Calu3 (cell line): ENCODE measurements at regions of chr1 and their contacts with region 1.

Region 1: DNA sequence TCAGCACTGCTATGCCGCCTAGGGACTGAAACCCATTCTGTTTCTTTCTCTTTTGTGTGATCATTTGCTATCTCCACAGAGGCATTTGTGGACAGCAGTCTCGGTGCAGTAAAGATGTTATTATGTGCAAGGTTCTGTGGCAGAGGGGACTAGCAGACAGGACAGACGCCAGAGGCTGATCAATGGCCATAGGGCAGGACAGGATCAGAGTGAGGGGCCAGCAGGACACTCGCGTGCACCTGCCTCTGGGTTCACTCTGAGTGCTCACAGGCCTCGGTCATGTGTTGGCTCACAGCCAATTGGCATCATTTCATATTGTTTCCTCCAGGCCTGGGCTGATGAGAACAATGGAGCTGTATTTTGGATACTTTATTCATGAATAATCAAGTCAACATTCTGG is 212.6 kb downstream of the TGFB2 start:
- DNase-seq: peak; percentile 86
- H3K4me3 Mint-ChIP-seq: peak overlapping the region; percentile 19
- H3K27ac Mint-ChIP-seq: peak overlapping the region; percentile 72
- H3K4me1 Mint-ChIP-seq: peaks cover 52% of the 10 kb centered on the region
- H3K27me3 Mint-ChIP-seq: no peaks in the 10 kb centered on the region
- CTCF ChIP-seq: no peak

Region 2: DNA sequence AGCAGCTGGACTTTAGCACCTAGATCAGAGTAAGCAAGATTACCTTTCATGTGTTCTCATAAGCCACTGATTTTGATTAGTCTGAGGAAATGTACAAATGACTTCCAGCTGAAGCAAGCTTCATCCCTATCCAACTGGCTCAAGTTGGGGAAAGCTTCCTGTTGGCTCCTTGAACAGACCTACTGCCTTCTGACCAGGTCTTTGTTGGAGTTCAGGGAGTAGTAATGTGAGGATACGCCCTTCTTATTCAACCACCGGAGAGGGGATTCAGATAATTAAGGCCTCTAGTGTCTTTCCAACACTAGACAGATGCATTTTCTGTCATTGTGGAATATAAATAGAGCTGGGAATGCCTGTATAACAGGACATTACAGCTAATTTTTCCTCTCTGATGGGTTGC is 56.3 kb after region 1 on chr1:
- CTCF ChIA-PET with region 1: no interaction called
- intact Hi-C with region 1: loop called (anchors 2 kb)
- DNase-seq: no peak
- H3K4me3 Mint-ChIP-seq: no peak overlapping the region
- H3K27ac Mint-ChIP-seq: no peak overlapping the region
- H3K4me1 Mint-ChIP-seq: peaks cover 8% of the 10 kb centered on the region
- H3K27me3 Mint-ChIP-seq: no peaks in the 10 kb centered on the region
- CTCF ChIP-seq: no peak

Region 3: GRCh38 chr1:218658899-218659298 is 101.2 kb after region 1 on chr1:
- CTCF ChIA-PET with region 1: no interaction called
- intact Hi-C with region 1: loop called (anchors 5 kb)
- DNase-seq: peak; percentile 37
- H3K4me3 Mint-ChIP-seq: no peak overlapping the region
- H3K27ac Mint-ChIP-seq: peak overlapping the region; percentile 75
- H3K4me1 Mint-ChIP-seq: peaks cover 59% of the 10 kb centered on the region
- H3K27me3 Mint-ChIP-seq: no peaks in the 10 kb centered on the region
- CTCF ChIP-seq: no peak

Region 4: GRCh38 chr1:218674280-218674773 is 116.6 kb after region 1 on chr1:
- CTCF ChIA-PET with region 1: no interaction called
- intact Hi-C with region 1: loop called (anchors 5 kb)
- DNase-seq: peak; percentile 76
- H3K4me3 Mint-ChIP-seq: peak overlapping the region; percentile 28
- H3K27ac Mint-ChIP-seq: peak overlapping the region; percentile 59
- H3K4me1 Mint-ChIP-seq: peaks cover 19% of the 10 kb centered on the region
- H3K27me3 Mint-ChIP-seq: no peaks in the 10 kb centered on the region
- CTCF ChIP-seq: no peak

Region 5: DNA sequence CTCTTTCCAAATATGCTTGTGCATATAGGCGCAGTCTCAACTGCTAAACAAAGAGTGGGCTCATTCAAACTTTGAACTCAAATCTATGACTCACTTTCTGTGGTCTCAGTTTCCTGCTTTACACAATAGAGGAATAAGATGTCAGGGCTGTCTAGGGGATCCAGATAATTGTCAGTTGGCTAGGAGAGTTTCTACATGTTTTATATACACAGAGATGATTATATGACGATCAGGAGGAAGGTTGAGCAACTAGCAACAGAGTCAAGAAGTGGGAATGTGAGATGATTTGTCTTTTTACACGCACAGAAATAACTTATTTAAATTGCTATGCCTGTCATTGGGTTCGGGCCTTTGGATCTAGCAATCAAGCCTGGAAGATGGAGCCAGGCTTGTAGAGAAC is 316.6 kb after region 1 on chr1:
- CTCF ChIA-PET with region 1: no interaction called
- intact Hi-C with region 1: no loop called
- DNase-seq: peak; percentile 52
- H3K4me3 Mint-ChIP-seq: peak overlapping the region; percentile 47
- H3K27ac Mint-ChIP-seq: peak overlapping the region; percentile 68
- H3K4me1 Mint-ChIP-seq: peaks cover 59% of the 10 kb centered on the region
- H3K27me3 Mint-ChIP-seq: no peaks in the 10 kb centered on the region
- CTCF ChIP-seq: no peak